ENCODE measurements at regions of chr19 and their contacts with region 1.

Region 1: GRCh38 chr19:38402967-38403861 is at the start of gene FAM98C:
- DNase-seq: peak; percentile 93 to 97
- ATAC-seq: peak; percentile 98 to 100 (median 99)
- H3K4me3 ChIP-seq: peak within 1 kb of the TSS; percentile 68 to 99 (median 87)
- H3K27ac ChIP-seq: peak within 1 kb of the TSS in 9 of 10 donors; percentile 68 to 95 (median 82)
- H3K4me1 ChIP-seq: peaks cover 0 to 17% (median 11%) of the 10 kb centered on the region in 9 donors
- H3K27me3 ChIP-seq: peaks cover 8 to 35% (median 27%) of the 10 kb centered on the region in 7 donors
- CTCF ChIP-seq: peak; percentile 95 to 100 (median 100)
- total RNA-seq, gene FAM98C: 9.8 to 16.1 (median 12.2) TPM

Region 2: GRCh38 chr19:38298821-38299567 is 104.2 kb before region 1 on chr19:
- intact Hi-C with region 1: no loop called
- DNase-seq: no peak
- ATAC-seq: peak in 5 of 8 donors; percentile 5 to 34 (median 16)
- H3K4me3 ChIP-seq: no peak overlapping the region
- H3K27ac ChIP-seq: peak overlapping the region in 1 of 10 donors; percentile 15
- H3K4me1 ChIP-seq: peaks cover 0 to 7% (median 0%) of the 10 kb centered on the region in 9 donors
- H3K27me3 ChIP-seq: no peaks in the 10 kb centered on the region
- CTCF ChIP-seq: no peak

Region 3: DNA sequence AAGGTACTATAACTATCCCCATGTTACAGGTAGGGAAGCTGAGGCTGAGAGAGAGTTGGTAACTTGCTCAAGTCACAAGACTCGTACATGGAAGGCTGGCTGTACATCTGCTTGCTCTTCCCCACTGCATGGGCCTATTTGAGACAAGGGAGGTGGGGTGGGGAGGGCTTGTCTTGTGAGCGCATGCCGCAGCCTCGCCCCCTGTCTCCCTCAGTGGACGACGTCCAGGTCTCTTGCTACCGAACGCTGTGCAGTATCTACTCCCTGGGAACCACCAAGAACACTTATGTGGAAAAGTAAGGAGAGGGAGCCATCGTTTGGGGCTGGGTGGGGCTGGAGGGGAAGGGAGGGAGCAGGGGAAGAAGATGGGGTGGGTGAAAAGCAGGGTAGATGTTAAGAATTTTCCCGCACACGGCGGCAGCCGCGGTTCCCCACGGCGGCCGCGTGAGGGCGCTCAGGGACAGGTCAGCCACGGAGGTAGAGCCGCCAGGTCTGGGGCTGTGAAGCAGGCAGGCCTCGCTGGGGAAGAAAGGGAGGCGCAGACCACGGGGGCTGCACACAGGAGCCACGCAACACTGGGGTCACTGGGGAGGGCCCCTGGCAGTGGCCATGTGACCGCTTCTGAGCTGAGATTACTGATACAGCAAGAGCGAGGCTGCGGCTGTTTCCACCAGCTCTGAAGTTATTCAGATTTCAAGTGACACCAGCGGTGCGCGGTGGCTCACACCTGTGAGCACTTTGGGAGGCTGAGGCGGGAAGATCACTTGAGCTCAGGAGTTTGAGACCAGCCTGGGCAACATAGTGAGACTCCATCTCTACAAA is 111.8 kb after region 1 on chr19:
- intact Hi-C with region 1: loop called in 5 of 10 experiments (anchors 10 kb)
- DNase-seq: peak; percentile 32 to 67
- ATAC-seq: peak in 7 of 8 donors; percentile 73 to 85 (median 79)
- H3K4me3 ChIP-seq: peak overlapping the region in 1 of 10 donors; percentile 18
- H3K27ac ChIP-seq: no peak overlapping the region
- H3K4me1 ChIP-seq: peaks cover 0 to 7% (median 0%) of the 10 kb centered on the region in 9 donors
- H3K27me3 ChIP-seq: peaks cover 0 to 34% (median 6%) of the 10 kb centered on the region in 7 donors
- CTCF ChIP-seq: peak; percentile 61 to 90 (median 85)

Region 4: GRCh38 chr19:39474139-39474622 is 1071.0 kb after region 1 on chr19:
- intact Hi-C with region 1: loop called in 1 of 10 experiments (anchors 10 kb)
- DNase-seq: peak; percentile 44 to 65
- ATAC-seq: peak; percentile 53 to 77 (median 72)
- H3K4me3 ChIP-seq: no peak overlapping the region
- H3K27ac ChIP-seq: peak overlapping the region in 1 of 10 donors; percentile 11
- H3K4me1 ChIP-seq: peaks cover 0 to 7% (median 0%) of the 10 kb centered on the region in 9 donors
- H3K27me3 ChIP-seq: no peaks in the 10 kb centered on the region
- CTCF ChIP-seq: peak; percentile 61 to 79 (median 73)

Measured in heart right ventricle (tissue), 16 donors.